Dendritic cell treated with granulocyte-macrophage colony-stimulating factor and Interleukin-4, amounts not matched to agents 40 ng/mL and 50 ng/mL, for 4 days (primary cell): ENCODE measurements at regions of chr15 and their contacts with region 1.

Region 1: GRCh38 chr15:55637086-55637485 is 48.9 kb upstream of the PYGO1 start:
- H3K4me3 Mint-ChIP-seq: no peak overlapping the region
- H3K27ac Mint-ChIP-seq: no peak overlapping the region
- H3K4me1 Mint-ChIP-seq: no peaks in the 10 kb centered on the region
- H3K27me3 Mint-ChIP-seq: no peaks in the 10 kb centered on the region

Region 2: DNA sequence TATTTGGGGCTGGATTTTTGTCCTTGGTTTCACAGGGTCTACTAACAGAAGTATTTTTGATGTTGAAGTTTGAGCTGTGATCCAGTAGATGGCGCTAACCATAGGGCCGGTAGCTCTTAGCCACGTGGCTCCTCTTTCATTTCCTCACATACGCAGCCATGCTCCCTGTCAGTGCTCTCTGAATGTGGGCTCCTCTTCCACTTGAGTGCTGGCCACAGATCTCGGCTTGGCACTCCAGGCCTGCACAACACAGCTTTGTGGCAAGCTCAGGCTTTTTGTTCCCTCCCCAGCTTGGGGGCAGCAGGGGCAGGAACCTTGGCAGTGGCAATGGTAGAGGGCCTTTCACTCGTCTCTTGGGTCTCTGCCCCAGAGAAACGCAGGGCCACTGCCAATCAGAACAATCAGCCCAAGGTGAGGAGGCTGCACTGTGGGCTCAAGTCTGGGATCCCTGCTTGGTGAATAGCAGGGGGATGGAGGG is 110.5 kb before region 1 on chr15:
- intact Hi-C with region 1: loop called (anchors 1 kb)
- H3K4me3 Mint-ChIP-seq: no peak overlapping the region
- H3K27ac Mint-ChIP-seq: no peak overlapping the region
- H3K4me1 Mint-ChIP-seq: peaks cover 6% of the 10 kb centered on the region
- H3K27me3 Mint-ChIP-seq: peaks cover 10% of the 10 kb centered on the region